Calu3 (cell line): ENCODE measurements at regions of chr1 and their contacts with region 1.

Region 1: DNA sequence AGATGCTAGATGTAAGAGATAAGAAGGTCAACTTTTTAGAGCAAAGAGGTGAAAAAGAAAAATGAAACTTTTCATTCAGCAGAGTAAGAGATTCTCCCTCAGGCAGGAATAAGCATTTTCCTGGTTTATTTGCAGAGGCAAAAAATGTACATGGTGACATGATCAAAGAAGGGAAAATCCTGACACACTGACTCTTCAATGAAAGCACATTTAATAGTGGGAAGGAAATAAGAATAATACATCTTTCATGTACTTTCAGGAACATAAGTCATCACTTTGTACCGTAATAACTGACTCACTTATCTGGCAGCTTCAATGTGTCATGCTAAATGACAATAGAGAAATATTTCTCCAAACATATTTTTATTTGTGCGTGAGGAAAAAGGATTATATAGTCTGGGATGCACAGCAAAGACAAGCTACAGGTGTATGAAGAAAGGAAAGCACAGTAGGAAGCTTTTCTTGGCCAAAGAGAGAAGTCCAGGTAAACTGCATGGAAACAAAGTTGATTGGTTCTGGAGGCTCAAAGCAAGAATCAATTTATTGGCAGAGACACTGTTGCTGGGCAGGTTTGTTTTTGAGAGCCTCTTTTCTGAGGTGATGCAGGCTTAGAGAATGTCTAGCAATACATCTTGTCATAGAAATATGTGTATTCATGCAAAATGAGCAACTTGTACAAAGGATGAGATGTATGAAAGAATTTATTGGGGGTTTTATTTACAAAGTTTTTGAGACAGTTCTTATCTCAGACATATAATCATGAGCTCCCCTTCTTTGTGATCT is 1409.0 kb downstream of the PLA2G4A start:
- DNase-seq: peak; percentile 7
- H3K4me3 Mint-ChIP-seq: no peak overlapping the region
- H3K27ac Mint-ChIP-seq: no peak overlapping the region
- H3K4me1 Mint-ChIP-seq: peaks cover 36% of the 10 kb centered on the region
- H3K27me3 Mint-ChIP-seq: no peaks in the 10 kb centered on the region
- CTCF ChIP-seq: no peak

Region 2: GRCh38 chr1:188027613-188028012 is 210.1 kb before region 1 on chr1:
- CTCF ChIA-PET with region 1: no interaction called
- intact Hi-C with region 1: loop called (anchors 10 kb)
- DNase-seq: peak; percentile 17
- H3K4me3 Mint-ChIP-seq: peak overlapping the region; percentile 6
- H3K27ac Mint-ChIP-seq: peak overlapping the region; percentile 97
- H3K4me1 Mint-ChIP-seq: peaks cover 31% of the 10 kb centered on the region
- H3K27me3 Mint-ChIP-seq: no peaks in the 10 kb centered on the region
- CTCF ChIP-seq: no peak

Region 3: DNA sequence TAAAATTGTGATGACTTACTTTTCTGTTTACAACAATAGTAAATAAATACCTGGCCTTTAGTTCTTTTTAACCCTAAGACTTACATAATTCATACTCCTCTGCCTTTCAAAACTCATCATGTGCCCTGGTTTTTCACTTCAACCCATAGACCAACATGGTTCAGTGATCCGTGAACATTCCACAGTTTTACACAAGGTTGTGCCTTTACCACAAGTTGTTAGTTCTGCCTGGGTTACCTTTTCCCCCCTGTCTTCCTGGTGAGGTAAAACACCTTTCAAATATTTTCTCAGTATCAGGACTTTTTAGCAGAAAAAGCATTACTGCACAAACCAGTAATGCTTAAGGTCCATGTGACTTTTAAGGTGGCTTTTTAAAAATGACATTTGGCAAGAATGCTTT is 57.4 kb after region 1 on chr1:
- CTCF ChIA-PET with region 1: no interaction called
- intact Hi-C with region 1: no loop called
- DNase-seq: no peak
- H3K4me3 Mint-ChIP-seq: no peak overlapping the region
- H3K27ac Mint-ChIP-seq: no peak overlapping the region
- H3K4me1 Mint-ChIP-seq: no peaks in the 10 kb centered on the region
- H3K27me3 Mint-ChIP-seq: no peaks in the 10 kb centered on the region
- CTCF ChIP-seq: no peak

Region 4: GRCh38 chr1:188314557-188315137 is 76.9 kb after region 1 on chr1:
- CTCF ChIA-PET with region 1: no interaction called
- intact Hi-C with region 1: loop called (anchors 5 kb)
- DNase-seq: no peak
- H3K4me3 Mint-ChIP-seq: no peak overlapping the region
- H3K27ac Mint-ChIP-seq: no peak overlapping the region
- H3K4me1 Mint-ChIP-seq: no peaks in the 10 kb centered on the region
- H3K27me3 Mint-ChIP-seq: no peaks in the 10 kb centered on the region
- CTCF ChIP-seq: no peak